ENCODE measurements at regions of chr7 and their contacts with region 1.

Region 1: GRCh38 chr7:90155206-90155605 is 937 bp downstream of the STEAP1 start:
- DNase-seq: no peak
- H3K4me3 ChIP-seq: no peak overlapping the region
- H3K27ac ChIP-seq: no peak overlapping the region
- H3K4me1 ChIP-seq: no peaks in the 10 kb centered on the region
- H3K27me3 ChIP-seq: no peaks in the 10 kb centered on the region
- CTCF ChIP-seq: no peak

Region 2: GRCh38 chr7:90211391-90212148 is 56.4 kb after region 1 on chr7 and contains the start of gene STEAP2:
- intact Hi-C with region 1: loop called (anchors 10 kb)
- DNase-seq: peak; percentile 89 to 96
- H3K4me3 ChIP-seq: peak within 1 kb of the TSS; percentile 75 to 76
- H3K27ac ChIP-seq: peak within 1 kb of the TSS; percentile 83 to 84
- H3K4me1 ChIP-seq: peaks cover 0 to 26% (median 8%) of the 10 kb centered on the region in 4 donors
- H3K27me3 ChIP-seq: no peaks in the 10 kb centered on the region
- CTCF ChIP-seq: peak; percentile 61 to 70

Region 3: DNA sequence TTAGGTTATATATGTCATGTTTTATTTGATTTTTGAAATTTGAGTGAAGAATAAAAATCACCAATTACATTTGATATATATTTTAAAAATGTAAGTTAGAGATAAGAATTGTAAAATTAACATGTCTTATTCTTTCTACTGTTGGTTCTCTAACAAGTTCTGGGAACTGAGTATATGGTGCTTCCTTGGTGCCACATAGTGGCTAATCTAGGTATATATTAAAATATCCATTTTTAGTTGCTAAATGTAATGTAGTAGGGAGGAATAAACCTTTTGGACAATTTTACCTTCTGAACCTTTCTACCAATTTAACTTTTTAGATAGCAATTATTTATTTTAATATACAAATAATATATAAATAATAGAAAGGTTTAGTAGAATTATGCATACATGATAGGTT is 107.2 kb after region 1 on chr7:
- intact Hi-C with region 1: loop called (anchors 5 kb)
- DNase-seq: no peak
- H3K4me3 ChIP-seq: no peak overlapping the region
- H3K27ac ChIP-seq: no peak overlapping the region
- H3K4me1 ChIP-seq: peaks cover 0 to 4% (median 0%) of the 10 kb centered on the region in 4 donors
- H3K27me3 ChIP-seq: no peaks in the 10 kb centered on the region
- CTCF ChIP-seq: peak; percentile 51 to 53

Region 4: DNA sequence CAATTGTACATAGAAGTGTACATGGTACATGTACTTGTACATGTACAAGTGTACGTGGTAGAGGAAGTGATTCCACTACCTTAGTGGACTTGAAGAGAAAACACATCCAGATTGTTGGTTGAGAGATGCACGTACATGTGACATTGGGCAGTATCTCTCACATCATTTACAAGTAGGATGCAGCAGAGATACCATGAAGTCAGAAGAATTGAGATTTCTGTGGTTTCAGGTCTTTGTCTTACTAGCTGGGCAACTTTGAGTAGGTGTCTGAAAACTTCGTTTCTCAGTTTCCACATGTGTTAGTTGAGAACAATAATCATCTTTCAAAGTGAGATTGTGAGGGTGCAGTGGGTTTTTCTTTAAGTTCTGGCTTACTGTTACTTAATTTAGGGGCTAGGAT is 269.5 kb after region 1 on chr7:
- intact Hi-C with region 1: loop called (anchors 5 kb)
- DNase-seq: no peak
- H3K4me3 ChIP-seq: no peak overlapping the region
- H3K27ac ChIP-seq: no peak overlapping the region
- H3K4me1 ChIP-seq: no peaks in the 10 kb centered on the region
- H3K27me3 ChIP-seq: no peaks in the 10 kb centered on the region
- CTCF ChIP-seq: no peak